ENCODE measurements at regions of chr2 and their contacts with region 1.

Region 1: GRCh38 chr2:95043300-95044093 is 18.0 kb downstream of the MAL start:
- DNase-seq: peak; percentile 24 to 86 (median 82)
- H3K4me3 ChIP-seq: no peak overlapping the region
- H3K27ac ChIP-seq: no peak overlapping the region
- H3K4me1 ChIP-seq: peaks cover 0 to 28% (median 11%) of the 10 kb centered on the region in 4 experiments
- H3K27me3 ChIP-seq: peaks cover 0 to 3% (median 0%) of the 10 kb centered on the region in 5 experiments

Region 2: DNA sequence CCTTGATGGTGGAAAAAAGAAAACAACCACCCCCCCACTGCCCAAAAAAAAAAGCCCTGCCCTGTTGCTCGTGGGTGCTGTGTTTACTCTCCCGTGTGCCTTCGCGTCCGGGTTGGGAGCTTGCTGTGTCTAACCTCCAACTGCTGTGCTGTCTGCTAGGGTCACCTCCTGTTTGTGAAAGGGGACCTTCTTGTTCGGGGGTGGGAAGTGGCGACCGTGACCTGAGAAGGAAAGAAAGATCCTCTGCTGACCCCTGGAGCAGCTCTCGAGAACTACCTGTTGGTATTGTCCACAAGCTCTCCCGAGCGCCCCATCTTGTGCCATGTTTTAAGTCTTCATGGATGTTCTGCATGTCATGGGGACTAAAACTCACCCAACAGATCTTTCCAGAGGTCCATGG is 10.0 kb after region 1 on chr2:
- CTCF ChIA-PET with region 1: interaction called, 18 read pairs
- POLR2A ChIA-PET with region 1: no interaction called
- DNase-seq: peak; percentile 28 to 56 (median 54)
- H3K4me3 ChIP-seq: peak overlapping the region in 1 of 7 experiments; percentile 49
- H3K27ac ChIP-seq: no peak overlapping the region
- H3K4me1 ChIP-seq: peaks cover 0 to 4% (median 2%) of the 10 kb centered on the region in 4 experiments
- H3K27me3 ChIP-seq: peaks cover 0 to 12% (median 0%) of the 10 kb centered on the region in 5 experiments

Region 3: DNA sequence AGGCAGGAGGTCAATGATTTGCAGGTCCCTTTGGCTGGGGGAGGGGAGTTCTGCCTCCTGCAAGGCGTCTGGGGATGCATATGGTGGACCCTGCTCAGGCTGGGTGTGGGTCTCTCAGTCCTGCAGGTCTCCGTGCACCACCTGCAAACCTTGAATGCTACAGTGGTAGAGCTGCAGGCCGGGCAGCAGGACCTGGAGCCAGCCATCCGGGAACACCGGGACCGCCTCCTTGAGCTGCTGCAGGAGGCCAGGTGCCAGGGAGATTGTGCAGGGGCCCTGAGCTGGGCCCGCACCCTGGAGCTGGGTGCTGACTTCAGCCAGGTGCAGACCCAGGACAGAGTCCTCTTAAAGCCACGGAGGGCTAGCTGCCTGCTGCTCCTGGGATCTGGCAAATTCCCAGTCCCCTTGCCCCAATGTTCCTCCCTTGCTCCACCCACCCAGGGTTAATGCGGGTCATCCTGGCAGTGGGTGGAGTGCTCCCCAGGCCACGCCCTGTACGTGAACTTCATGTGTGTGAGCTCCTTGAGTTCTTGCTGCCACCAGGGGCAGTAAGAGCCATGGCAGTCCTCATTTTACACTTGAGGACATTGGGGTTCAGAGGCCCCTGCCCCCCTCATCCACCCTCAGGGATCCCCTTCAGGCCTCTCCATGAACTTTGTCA is 233.9 kb after region 1 on chr2:
- CTCF ChIA-PET with region 1: no interaction called
- POLR2A ChIA-PET with region 1: no interaction called
- DNase-seq: no peak
- H3K4me3 ChIP-seq: no peak overlapping the region
- H3K27ac ChIP-seq: no peak overlapping the region
- H3K4me1 ChIP-seq: peaks cover 0 to 26% (median 12%) of the 10 kb centered on the region in 4 experiments
- H3K27me3 ChIP-seq: no peaks in the 10 kb centered on the region

Measured in common myeloid progenitor, CD34-positive (primary cell).